PC-3 (cell line): ENCODE measurements at regions of chr2 and their contacts with region 1.

Region 1: DNA sequence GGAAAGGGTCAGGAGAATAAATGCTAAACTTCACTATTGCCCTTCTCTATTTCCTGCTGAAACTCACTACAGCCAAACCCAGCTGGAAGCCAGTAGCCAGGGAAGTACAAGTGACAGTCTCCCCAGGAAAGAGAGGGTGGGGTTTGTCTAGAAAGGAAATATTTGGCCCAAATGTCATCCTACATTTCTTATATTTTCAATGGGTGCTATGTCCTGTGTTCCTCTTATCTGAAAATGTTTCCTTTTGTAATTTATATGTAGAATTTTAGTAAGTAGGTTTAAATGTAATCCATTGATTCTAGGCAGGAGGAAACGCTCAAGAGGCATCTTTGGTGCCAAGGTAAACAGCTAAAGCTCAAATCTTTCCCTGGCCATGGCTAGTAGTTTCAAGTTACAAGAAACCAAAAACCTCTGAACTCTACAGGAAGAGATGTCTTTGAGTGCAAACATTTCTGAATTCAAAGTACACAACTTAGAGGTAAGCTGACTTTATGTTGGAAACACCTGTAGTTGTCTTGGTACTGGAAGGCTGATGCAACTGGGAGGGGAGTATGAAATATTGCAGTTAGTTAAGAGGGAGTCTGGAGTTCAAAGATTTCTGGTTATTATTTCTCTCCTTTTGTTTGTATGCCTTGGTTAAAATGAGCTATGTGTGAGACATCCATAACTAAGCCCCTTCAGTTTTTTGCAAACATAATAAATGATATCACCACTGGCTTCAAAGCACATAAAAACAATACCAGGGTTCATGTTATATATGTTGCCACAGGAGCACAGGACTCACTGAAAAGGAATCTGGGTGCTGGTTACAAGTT is 356.1 kb upstream of the ZC3H15 start:
- DNase-seq: peak; percentile 87
- ATAC-seq: peak; percentile 75
- H3K4me3 ChIP-seq: peak overlapping the region; percentile 40; the same call in 1 of the 2 replicates
- H3K27ac ChIP-seq: peak overlapping the region; percentile 87
- H3K4me1 ChIP-seq: peaks cover 47% of the 10 kb centered on the region
- H3K27me3 ChIP-seq: no peaks in the 10 kb centered on the region
- CTCF ChIP-seq: no peak

Region 2: GRCh38 chr2:185628985-185629384 is 501.0 kb before region 1 on chr2:
- CTCF ChIA-PET with region 1: interaction called, 15 read pairs
- POLR2A ChIA-PET with region 1: no interaction called
- intact Hi-C with region 1: no loop called
- DNase-seq: peak; percentile 54
- ATAC-seq: no peak
- H3K4me3 ChIP-seq: no peak overlapping the region
- H3K27ac ChIP-seq: no peak overlapping the region
- H3K4me1 ChIP-seq: no peaks in the 10 kb centered on the region
- H3K27me3 ChIP-seq: no peaks in the 10 kb centered on the region
- CTCF ChIP-seq: peak; percentile 71

Region 3: GRCh38 chr2:186195696-186196095 is 65.7 kb after region 1 on chr2:
- CTCF ChIA-PET with region 1: no interaction called
- POLR2A ChIA-PET with region 1: no interaction called
- intact Hi-C with region 1: no loop called
- DNase-seq: no peak
- ATAC-seq: no peak
- H3K4me3 ChIP-seq: no peak overlapping the region
- H3K27ac ChIP-seq: no peak overlapping the region
- H3K4me1 ChIP-seq: no peaks in the 10 kb centered on the region
- H3K27me3 ChIP-seq: no peaks in the 10 kb centered on the region
- CTCF ChIP-seq: no peak

Region 4: DNA sequence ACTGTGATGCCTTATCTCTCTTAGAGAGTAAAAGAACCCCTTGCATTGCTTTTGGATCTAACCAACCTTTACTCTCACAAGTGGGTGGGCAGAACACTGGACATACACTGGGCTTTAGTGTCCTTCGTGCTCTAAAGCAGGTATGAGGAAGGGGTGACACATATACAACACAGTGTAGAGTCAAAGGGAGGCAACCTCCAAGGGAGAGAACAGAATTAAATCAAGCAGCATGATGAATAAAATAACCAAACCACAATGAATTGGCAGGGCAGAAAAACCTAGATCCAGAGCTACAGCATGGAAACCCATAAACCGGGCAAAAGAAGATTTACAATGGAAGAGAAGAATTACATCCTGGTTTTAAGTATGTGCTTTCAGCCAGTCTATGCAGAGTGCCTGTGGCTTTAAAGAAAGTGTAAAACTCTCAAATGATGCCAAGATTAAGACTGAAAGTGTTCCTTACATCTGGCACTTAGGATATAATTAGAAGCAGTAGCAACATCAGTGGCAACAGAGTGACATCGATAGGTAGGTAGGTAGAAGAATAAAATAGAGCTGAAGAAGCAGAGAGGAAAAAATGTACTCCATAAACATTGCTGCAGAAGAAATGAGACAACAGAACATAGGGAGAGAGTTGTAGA is 164.4 kb after region 1 on chr2:
- CTCF ChIA-PET with region 1: no interaction called
- POLR2A ChIA-PET with region 1: no interaction called
- intact Hi-C with region 1: no loop called
- DNase-seq: no peak
- ATAC-seq: no peak
- H3K4me3 ChIP-seq: no peak overlapping the region
- H3K27ac ChIP-seq: no peak overlapping the region
- H3K4me1 ChIP-seq: no peaks in the 10 kb centered on the region
- H3K27me3 ChIP-seq: no peaks in the 10 kb centered on the region
- CTCF ChIP-seq: no peak

Region 5: GRCh38 chr2:186422226-186422625 is 292.3 kb after region 1 on chr2:
- CTCF ChIA-PET with region 1: no interaction called
- POLR2A ChIA-PET with region 1: no interaction called
- intact Hi-C with region 1: loop called (anchors 10 kb)
- DNase-seq: peak; percentile 93
- ATAC-seq: peak; percentile 91
- H3K4me3 ChIP-seq: no peak overlapping the region
- H3K27ac ChIP-seq: peak overlapping the region; percentile 38
- H3K4me1 ChIP-seq: peaks cover 28% of the 10 kb centered on the region
- H3K27me3 ChIP-seq: no peaks in the 10 kb centered on the region
- CTCF ChIP-seq: no peak